ENCODE measurements at regions of chr2 and their contacts with region 1.

Region 1: GRCh38 chr2:106638043-106638442 is 150.9 kb downstream of the CD8B2 start:
- DNase-seq: no peak
- ATAC-seq: no peak
- H3K4me3 ChIP-seq: no peak overlapping the region
- H3K27ac ChIP-seq: no peak overlapping the region
- H3K4me1 ChIP-seq: peaks cover 0 to 2% of the 10 kb centered on the region in 2 donors
- H3K27me3 ChIP-seq: no peaks in the 10 kb centered on the region

Region 2: GRCh38 chr2:107323946-107324565 is 686.0 kb after region 1 on chr2:
- intact Hi-C with region 1: no loop called
- DNase-seq: no peak
- ATAC-seq: no peak
- H3K4me3 ChIP-seq: no peak overlapping the region
- H3K27ac ChIP-seq: no peak overlapping the region
- H3K4me1 ChIP-seq: peaks cover 2 to 3% of the 10 kb centered on the region in 2 donors
- H3K27me3 ChIP-seq: no peaks in the 10 kb centered on the region

Region 3: GRCh38 chr2:107437807-107438206 is 799.8 kb after region 1 on chr2:
- intact Hi-C with region 1: loop called (anchors 5 kb)
- DNase-seq: no peak
- ATAC-seq: no peak
- H3K4me3 ChIP-seq: no peak overlapping the region
- H3K27ac ChIP-seq: no peak overlapping the region
- H3K4me1 ChIP-seq: no peaks in the 10 kb centered on the region
- H3K27me3 ChIP-seq: peaks cover 0 to 2% of the 10 kb centered on the region in 2 donors

Region 4: DNA sequence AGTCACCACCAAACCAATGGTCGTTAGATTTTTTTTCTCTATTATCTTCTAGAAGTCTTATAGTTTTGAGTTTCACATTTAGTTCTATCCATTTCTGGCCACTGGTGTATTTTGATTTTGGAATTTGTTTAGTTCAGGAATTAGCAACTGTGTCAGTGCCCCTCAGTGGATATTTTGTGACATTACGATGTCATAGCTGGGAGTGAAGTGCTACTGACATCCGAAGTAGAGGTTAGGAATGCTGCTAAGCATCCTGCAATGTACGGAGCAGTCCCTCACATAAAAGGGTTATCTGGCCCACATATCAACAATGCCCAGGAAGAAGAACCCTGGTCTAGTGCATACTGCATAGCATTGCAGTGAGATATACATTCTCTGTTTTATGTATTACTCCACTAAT is 1031.3 kb after region 1 on chr2:
- intact Hi-C with region 1: loop called (anchors 5 to 10 kb)
- DNase-seq: no peak
- ATAC-seq: peak; percentile 33
- H3K4me3 ChIP-seq: no peak overlapping the region
- H3K27ac ChIP-seq: no peak overlapping the region
- H3K4me1 ChIP-seq: no peaks in the 10 kb centered on the region
- H3K27me3 ChIP-seq: no peaks in the 10 kb centered on the region